ENCODE measurements at regions of chr1 and their contacts with region 1.

Region 1: GRCh38 chr1:153465811-153466636 is 5.6 kb upstream of the S100A7 start:
- DNase-seq: peak; percentile 9
- H3K4me3 ChIP-seq: no peak overlapping the region
- H3K27ac ChIP-seq: no peak overlapping the region
- H3K4me1 ChIP-seq: no peaks in the 10 kb centered on the region
- H3K27me3 ChIP-seq: peaks cover 0 to 13% of the 10 kb centered on the region in 2 experiments
- CTCF ChIP-seq: peak; percentile 75 to 90
- POLR2A ChIP-seq: no peak

Region 2: DNA sequence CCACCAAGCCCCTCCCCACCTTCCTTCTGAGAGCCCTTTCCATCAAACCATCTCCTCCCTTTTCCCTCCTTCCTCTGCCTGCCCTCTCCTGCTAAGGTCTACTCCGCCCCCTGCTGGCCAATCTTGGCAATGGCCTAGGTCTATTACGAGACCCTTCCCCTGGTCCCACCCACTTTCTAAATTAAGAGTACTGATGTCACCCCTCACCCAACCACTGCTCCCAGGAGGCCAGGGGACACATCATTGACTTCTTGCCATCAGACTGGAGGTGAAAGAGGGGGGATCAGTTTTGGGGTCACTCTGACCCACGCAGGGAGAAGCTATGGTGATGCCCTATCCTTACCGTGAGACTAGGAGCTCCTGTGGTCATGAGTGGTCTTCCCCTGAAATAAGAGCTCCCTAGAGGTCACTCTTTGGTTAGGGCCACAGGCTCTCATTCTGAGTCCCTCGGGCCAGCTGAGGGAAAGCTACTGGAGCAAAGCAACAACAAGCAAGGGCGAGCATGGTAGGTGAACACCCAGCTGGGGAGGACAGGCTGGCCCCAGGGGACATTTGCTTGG is 29.0 kb after region 1 on chr1:
- CTCF ChIA-PET with region 1: interaction called, 33 read pairs
- POLR2A ChIA-PET with region 1: no interaction called
- dilution Hi-C with region 1: no loop called
- intact Hi-C with region 1: loop called (anchors 1 kb)
- DNase-seq: peak; percentile 60
- H3K4me3 ChIP-seq: no peak overlapping the region
- H3K27ac ChIP-seq: no peak overlapping the region
- H3K4me1 ChIP-seq: no peaks in the 10 kb centered on the region
- H3K27me3 ChIP-seq: peaks cover 7 to 16% of the 10 kb centered on the region in 2 experiments
- CTCF ChIP-seq: peak; percentile 80 to 88
- POLR2A ChIP-seq: no peak

Region 3: GRCh38 chr1:153526132-153526543 is 60.1 kb after region 1 on chr1:
- CTCF ChIA-PET with region 1: no interaction called
- POLR2A ChIA-PET with region 1: no interaction called
- dilution Hi-C with region 1: no loop called
- intact Hi-C with region 1: no loop called
- DNase-seq: no peak
- H3K4me3 ChIP-seq: no peak overlapping the region
- H3K27ac ChIP-seq: no peak overlapping the region
- H3K4me1 ChIP-seq: peaks cover 3% of the 10 kb centered on the region
- H3K27me3 ChIP-seq: no peaks in the 10 kb centered on the region
- CTCF ChIP-seq: no peak
- POLR2A ChIP-seq: no peak

Region 4: GRCh38 chr1:153866045-153866850 is 400.2 kb after region 1 on chr1:
- CTCF ChIA-PET with region 1: no interaction called
- POLR2A ChIA-PET with region 1: no interaction called
- dilution Hi-C with region 1: no loop called
- intact Hi-C with region 1: no loop called
- DNase-seq: no peak
- H3K4me3 ChIP-seq: no peak overlapping the region
- H3K27ac ChIP-seq: no peak overlapping the region
- H3K4me1 ChIP-seq: no peaks in the 10 kb centered on the region
- H3K27me3 ChIP-seq: no peaks in the 10 kb centered on the region
- CTCF ChIP-seq: no peak
- POLR2A ChIP-seq: no peak

Measured in endothelial cell of umbilical vein (primary cell).